ENCODE measurements at regions of chr3 and their contacts with region 1.

Region 1: GRCh38 chr3:79521238-79521848 is 246.5 kb downstream of the ROBO1 start:
- DNase-seq: no peak
- ATAC-seq: no peak
- H3K4me3 ChIP-seq: no peak overlapping the region
- H3K27ac ChIP-seq: no peak overlapping the region
- H3K4me1 ChIP-seq: no peaks in the 10 kb centered on the region
- H3K27me3 ChIP-seq: no peaks in the 10 kb centered on the region

Region 2: DNA sequence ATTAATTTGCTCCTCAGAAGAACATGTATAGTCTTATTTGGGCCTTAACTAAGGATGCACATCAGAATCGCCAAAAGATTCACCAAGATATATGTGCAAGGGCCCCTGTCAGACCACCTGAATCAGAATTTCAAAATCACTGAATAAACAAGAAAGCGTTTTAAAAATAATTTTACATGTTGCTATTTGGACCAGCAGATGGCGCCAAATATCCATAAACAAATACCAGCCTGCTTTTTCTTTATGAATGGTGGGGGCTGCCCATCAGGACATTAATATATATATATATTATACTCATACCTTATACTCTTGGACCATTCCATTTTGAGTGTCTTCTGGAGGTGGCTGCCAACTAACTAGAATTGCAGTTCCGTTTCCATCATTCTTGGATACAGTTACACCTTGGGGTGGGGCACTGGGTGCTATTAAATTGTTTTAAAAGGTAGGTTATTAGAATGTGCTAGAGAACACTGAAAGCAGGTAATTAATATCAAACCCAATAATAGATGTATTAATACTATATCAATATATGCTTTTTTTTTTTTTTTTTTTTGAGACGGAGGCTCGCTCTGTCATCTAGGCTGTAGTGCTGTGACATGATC is 861.9 kb before region 1 on chr3:
- intact Hi-C with region 1: loop called in 2 of 4 experiments (anchors 10 kb)
- DNase-seq: no peak
- ATAC-seq: no peak
- H3K4me3 ChIP-seq: no peak overlapping the region
- H3K27ac ChIP-seq: no peak overlapping the region
- H3K4me1 ChIP-seq: no peaks in the 10 kb centered on the region
- H3K27me3 ChIP-seq: no peaks in the 10 kb centered on the region

Region 3: DNA sequence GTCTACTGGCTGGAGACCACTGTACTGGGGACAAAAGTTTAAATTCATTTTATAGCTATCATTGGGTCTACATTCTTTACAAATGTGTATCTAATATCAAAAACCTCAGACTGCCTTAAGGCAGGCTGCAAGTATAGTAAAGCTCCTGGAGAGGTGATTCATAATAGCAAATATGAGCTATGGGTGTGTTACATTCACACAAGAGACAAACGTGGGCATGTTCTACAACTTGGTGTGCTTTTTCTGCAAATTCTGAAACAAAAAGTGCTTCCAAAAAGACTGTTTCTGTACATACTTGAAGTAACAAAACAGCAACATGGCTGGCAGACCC is 854.9 kb before region 1 on chr3:
- intact Hi-C with region 1: loop called in 1 of 4 experiments (anchors 10 kb)
- DNase-seq: no peak
- ATAC-seq: no peak
- H3K4me3 ChIP-seq: no peak overlapping the region
- H3K27ac ChIP-seq: no peak overlapping the region
- H3K4me1 ChIP-seq: no peaks in the 10 kb centered on the region
- H3K27me3 ChIP-seq: no peaks in the 10 kb centered on the region

Region 4: DNA sequence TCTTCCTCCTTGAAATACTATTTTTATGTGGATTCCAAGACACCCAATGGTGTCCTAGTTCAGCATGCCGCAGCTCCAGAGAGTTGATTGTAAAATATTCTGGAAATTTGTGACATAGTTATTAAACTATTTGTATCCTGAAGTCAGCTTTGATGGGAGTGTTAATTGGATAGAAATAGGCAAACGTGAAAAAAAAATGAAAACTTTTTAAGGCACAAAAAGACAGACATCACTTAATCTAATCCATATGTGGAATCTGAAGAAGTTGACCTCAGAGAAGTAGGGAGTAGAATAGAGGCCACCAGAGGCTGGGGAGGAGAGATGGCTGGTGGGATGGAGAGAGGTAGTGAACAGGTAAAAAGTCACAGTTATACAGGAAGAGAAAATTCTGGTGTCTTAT is 457.7 kb before region 1 on chr3:
- intact Hi-C with region 1: no loop called
- DNase-seq: no peak
- ATAC-seq: no peak
- H3K4me3 ChIP-seq: no peak overlapping the region
- H3K27ac ChIP-seq: no peak overlapping the region
- H3K4me1 ChIP-seq: no peaks in the 10 kb centered on the region
- H3K27me3 ChIP-seq: no peaks in the 10 kb centered on the region

Region 5: GRCh38 chr3:79285380-79285779 is 236.0 kb before region 1 on chr3:
- intact Hi-C with region 1: no loop called
- DNase-seq: no peak
- ATAC-seq: no peak
- H3K4me3 ChIP-seq: no peak overlapping the region
- H3K27ac ChIP-seq: no peak overlapping the region
- H3K4me1 ChIP-seq: no peaks in the 10 kb centered on the region
- H3K27me3 ChIP-seq: no peaks in the 10 kb centered on the region

Region 6: GRCh38 chr3:80688814-80689213 is 1167.5 kb after region 1 on chr3:
- intact Hi-C with region 1: loop called in 1 of 4 experiments (anchors 5 kb)
- DNase-seq: no peak
- ATAC-seq: no peak
- H3K4me3 ChIP-seq: no peak overlapping the region
- H3K27ac ChIP-seq: no peak overlapping the region
- H3K4me1 ChIP-seq: no peaks in the 10 kb centered on the region
- H3K27me3 ChIP-seq: no peaks in the 10 kb centered on the region